Activated B cell treated with CpG ODN at 0.5 μM for 24 hours (primary cell): ENCODE measurements at regions of chr10 and their contacts with region 1.

Region 1: DNA sequence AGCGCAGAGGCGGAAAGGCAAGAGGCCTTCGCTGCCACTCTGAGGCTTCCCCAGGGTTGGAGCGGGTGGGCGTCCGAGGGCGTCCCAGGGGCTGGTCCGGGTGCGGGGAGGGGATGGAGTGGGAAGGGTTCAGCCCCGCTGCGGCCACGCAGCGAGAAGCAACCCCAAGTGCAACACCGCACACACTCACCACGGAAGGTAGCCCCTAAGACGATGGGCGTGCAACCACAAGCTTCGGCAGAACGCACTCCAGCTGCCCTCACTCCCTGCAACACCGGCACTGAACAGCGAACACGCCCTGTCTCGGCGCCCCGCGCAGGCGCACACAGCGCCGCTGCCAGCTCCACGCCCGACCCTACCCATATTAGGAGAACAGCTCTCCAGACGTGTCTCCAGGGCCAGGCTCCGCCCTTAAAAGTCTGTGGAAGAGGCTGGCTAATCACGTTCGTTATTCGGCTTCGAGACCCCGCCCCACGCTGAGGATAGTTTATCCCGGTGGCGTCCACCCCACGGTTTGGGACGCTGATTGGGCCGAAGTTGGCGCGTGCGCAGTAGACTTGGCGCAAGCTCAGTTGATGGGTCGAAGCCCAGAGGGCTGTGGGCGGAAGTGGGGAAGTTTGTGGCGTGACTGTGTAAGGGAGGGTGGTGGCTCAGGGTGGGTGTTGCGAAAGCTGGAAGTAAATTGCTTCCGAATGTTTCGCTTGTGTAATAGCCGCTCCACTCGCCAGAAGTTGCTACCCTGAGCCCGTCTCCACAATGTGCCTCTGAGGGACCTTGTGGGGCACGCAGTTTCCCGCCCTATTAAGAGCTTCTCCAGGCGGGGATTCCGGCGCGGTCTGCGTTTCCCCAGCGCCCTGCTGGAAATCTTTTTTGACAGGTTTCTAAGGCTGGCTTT is at the start of gene RSU1:
- DNase-seq: peak; percentile 100
- ATAC-seq: peak; percentile 98
- H3K4me3 Mint-ChIP-seq: peak within 1 kb of the TSS; percentile 94
- H3K27ac Mint-ChIP-seq: peak within 1 kb of the TSS; percentile 94
- H3K4me1 Mint-ChIP-seq: peaks cover 26% of the 10 kb centered on the region
- H3K27me3 Mint-ChIP-seq: no peaks in the 10 kb centered on the region
- CTCF ChIP-seq: no peak
- total RNA-seq, gene RSU1: 59.2 and 60.7 TPM in 2 replicates

Region 2: DNA sequence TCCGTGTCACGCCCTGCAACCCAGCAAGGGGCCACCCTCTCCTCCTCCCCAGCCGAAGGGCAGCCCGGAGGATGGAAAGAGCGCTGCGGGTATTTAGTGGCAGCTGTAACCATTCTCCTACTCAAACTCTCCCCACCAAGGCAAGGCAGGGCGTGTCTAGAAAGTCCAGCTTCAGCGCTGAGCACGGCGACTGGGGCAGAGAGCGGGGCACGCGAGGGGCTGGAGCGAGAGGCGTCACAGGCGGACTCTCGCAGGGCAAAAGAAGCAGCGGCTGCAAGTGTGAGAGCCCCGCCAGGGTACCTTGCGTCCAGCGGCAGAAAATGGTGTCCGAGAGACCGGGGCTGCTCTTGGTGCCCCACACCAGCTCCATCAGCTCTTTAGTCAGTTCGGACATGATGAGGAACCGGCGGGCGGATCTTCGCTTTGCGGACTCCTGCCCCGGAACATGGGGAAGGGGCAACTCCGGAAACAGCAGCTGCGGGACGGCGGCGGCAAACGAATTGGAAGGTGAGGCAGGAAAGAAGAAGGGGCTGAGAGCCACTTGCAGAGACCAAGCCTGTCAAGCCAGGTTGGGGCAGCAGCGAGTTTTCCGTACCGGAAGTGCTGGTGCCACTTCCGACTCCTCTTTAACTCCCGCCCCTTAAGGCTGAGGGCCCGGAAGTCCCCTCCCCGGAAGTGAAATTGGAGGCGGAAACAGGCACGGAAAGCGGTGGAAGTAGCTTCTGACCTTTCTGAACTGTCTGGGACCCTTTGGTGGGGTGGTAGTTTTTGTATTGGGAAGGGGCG is 957.3 kb before region 1 on chr10 and contains the start of gene MINDY3:
- CTCF ChIA-PET with region 1: no interaction called
- POLR2A ChIA-PET with region 1: interaction called, 8 read pairs
- intact Hi-C with region 1: loop called (anchors 1 kb)
- DNase-seq: peak; percentile 76
- ATAC-seq: peak; percentile 92
- H3K4me3 Mint-ChIP-seq: peak within 1 kb of the TSS; percentile 99
- H3K27ac Mint-ChIP-seq: peak within 1 kb of the TSS; percentile 92
- H3K4me1 Mint-ChIP-seq: peaks cover 39% of the 10 kb centered on the region
- H3K27me3 Mint-ChIP-seq: peaks cover 16% of the 10 kb centered on the region
- CTCF ChIP-seq: no peak
- total RNA-seq, gene MINDY3: 23.2 and 23.4 TPM in 2 replicates

Region 3: GRCh38 chr10:16828114-16828568 is 10.8 kb after region 1 on chr10:
- CTCF ChIA-PET with region 1: interaction called, 4 read pairs
- POLR2A ChIA-PET with region 1: interaction called, 5 read pairs
- intact Hi-C with region 1: loop called (anchors 1 kb)
- DNase-seq: peak; percentile 16
- ATAC-seq: peak; percentile 86
- H3K4me3 Mint-ChIP-seq: no peak overlapping the region
- H3K27ac Mint-ChIP-seq: no peak overlapping the region
- H3K4me1 Mint-ChIP-seq: peaks cover 6% of the 10 kb centered on the region
- H3K27me3 Mint-ChIP-seq: no peaks in the 10 kb centered on the region
- CTCF ChIP-seq: no peak

Region 4: DNA sequence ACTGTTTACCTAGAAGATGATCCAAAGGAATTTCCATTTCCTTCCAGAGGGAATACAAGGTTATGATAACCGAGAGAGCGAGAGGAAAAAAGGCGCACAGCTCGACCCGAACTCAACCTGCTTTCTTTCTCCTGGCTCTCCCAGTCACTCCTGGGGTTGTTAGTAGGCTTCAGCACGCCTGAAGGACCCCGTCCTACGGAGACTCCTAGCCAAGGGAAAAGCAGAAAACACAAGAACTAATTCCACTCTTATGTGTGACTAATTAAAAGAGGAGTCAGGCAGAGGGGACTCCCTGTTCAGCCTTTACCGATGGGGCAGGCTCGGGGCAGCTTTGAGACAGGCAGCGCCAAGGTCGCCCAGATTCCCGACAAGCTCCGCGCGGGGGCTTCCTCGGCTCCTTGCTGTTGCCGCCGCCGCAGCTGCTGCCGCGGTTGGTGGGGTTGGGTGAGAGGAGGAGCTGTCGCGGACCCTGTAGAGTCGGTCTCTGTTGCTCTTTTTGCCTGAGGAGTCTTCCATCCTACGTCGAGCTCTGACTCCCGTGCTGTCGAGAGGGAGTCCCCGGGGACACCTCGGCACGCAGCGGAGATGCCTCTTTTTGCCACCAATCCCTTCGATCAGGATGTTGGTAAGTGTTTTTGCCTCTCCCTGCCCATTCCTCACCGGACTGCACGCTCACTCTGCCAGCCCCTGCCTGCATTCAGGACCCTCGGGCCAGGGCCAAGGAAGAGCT is 826.5 kb after region 1 on chr10 and contains the start of gene STAM:
- CTCF ChIA-PET with region 1: no interaction called
- POLR2A ChIA-PET with region 1: interaction called, 11 read pairs
- intact Hi-C with region 1: loop called (anchors 1 kb)
- DNase-seq: peak; percentile 86
- ATAC-seq: peak; percentile 91
- H3K4me3 Mint-ChIP-seq: peak within 1 kb of the TSS; percentile 99
- H3K27ac Mint-ChIP-seq: peak within 1 kb of the TSS; percentile 100
- H3K4me1 Mint-ChIP-seq: peaks cover 54% of the 10 kb centered on the region
- H3K27me3 Mint-ChIP-seq: no peaks in the 10 kb centered on the region
- CTCF ChIP-seq: no peak
- total RNA-seq, gene STAM: 25.5 and 28.7 TPM in 2 replicates

Region 5: DNA sequence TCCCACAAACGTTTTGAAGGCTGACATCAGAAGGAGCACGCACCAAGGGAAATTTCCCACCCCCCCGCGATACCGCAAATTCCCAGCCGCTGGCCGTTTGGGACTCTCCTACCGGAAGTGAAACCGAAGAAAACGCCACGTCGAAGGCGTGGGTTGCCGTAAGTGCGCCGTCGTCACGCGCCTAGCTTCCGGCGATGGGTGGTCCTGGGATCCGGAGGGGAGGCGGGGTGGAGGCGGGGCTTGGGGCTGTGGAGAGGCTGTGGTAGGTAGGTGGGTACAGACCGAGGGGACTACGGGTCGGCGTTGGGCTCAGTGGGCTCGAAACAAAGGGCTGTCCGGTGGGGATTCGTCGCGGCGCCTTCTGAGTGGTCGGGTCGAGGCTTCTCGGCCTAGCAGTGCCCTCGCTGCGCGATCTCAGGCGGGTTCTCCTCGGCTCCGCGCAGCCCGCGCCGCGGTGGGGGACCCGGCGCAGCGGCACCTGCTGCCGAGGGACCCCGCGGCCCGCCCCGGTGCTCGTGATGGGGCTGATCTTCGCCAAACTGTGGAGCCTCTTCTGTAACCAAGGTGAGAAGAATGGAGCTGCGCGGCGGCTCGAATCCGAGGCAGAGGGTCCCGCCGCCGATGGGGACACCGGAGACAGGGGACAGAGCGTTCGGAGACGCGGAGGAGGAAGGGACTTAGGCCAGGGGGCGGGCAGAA is 1841.9 kb after region 1 on chr10 and contains the start of gene ARL5B:
- CTCF ChIA-PET with region 1: no interaction called
- POLR2A ChIA-PET with region 1: interaction called, 5 read pairs
- intact Hi-C with region 1: loop called (anchors 2 kb)
- DNase-seq: peak; percentile 94
- ATAC-seq: peak; percentile 97
- H3K4me3 Mint-ChIP-seq: peak within 1 kb of the TSS; percentile 98
- H3K27ac Mint-ChIP-seq: peak within 1 kb of the TSS; percentile 97
- H3K4me1 Mint-ChIP-seq: peaks cover 41% of the 10 kb centered on the region
- H3K27me3 Mint-ChIP-seq: no peaks in the 10 kb centered on the region
- CTCF ChIP-seq: no peak
- total RNA-seq, gene ARL5B: 9.4 and 10.6 TPM in 2 replicates